ENCODE measurements at regions of chrX and their contacts with region 1.

Region 1: DNA sequence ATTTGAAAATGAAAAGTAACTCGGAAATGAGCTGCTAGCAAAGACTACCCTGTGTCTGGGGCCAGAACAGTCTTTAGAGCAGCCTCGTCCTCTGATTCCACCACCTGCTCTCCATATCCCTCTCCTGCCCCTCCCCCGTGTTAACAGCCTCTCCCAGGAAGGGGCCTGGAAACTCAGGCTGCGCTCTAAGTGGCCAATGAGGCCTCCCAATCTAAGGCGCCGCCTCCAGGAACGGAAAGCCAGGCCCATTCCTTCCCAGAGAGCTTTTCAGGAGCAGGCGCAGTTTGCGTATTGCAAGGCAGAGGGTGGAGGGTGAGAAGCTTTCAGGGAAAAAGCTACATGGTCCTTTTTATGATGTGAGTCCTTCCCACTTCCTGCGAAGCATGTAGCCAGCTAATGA is 31.2 kb downstream of the RS1 start:
- DNase-seq: peak in 1 of 9 experiments; percentile 29
- ATAC-seq: no peak
- H3K4me3 ChIP-seq: no peak overlapping the region
- H3K4me3 Mint-ChIP-seq: no peak overlapping the region
- H3K27ac ChIP-seq: no peak overlapping the region
- H3K27ac Mint-ChIP-seq: no peak overlapping the region
- H3K4me1 ChIP-seq: no peaks in the 10 kb centered on the region
- H3K4me1 Mint-ChIP-seq: no peaks in the 10 kb centered on the region
- H3K27me3 ChIP-seq: no peaks in the 10 kb centered on the region
- H3K27me3 Mint-ChIP-seq: no peaks in the 10 kb centered on the region
- CTCF ChIP-seq: no peak

Region 2: GRCh38 chrX:18725310-18725943 is 84.7 kb after region 1 on chrX:
- CTCF ChIA-PET with region 1: no interaction called
- POLR2A ChIA-PET with region 1: no interaction called
- intact Hi-C with region 1: loop called in 1 of 2 experiments (anchors 10 kb)
- DNase-seq: no peak
- ATAC-seq: no peak
- H3K4me3 ChIP-seq: no peak overlapping the region
- H3K4me3 Mint-ChIP-seq: no peak overlapping the region
- H3K27ac ChIP-seq: no peak overlapping the region
- H3K27ac Mint-ChIP-seq: no peak overlapping the region
- H3K4me1 ChIP-seq: no peaks in the 10 kb centered on the region
- H3K4me1 Mint-ChIP-seq: peaks cover 5% of the 10 kb centered on the region
- H3K27me3 ChIP-seq: no peaks in the 10 kb centered on the region
- H3K27me3 Mint-ChIP-seq: no peaks in the 10 kb centered on the region
- CTCF ChIP-seq: no peak

Measured in CD8-positive, alpha-beta T cell (primary cell).